ENCODE measurements at regions of chr16 and their contacts with region 1.

Region 1: DNA sequence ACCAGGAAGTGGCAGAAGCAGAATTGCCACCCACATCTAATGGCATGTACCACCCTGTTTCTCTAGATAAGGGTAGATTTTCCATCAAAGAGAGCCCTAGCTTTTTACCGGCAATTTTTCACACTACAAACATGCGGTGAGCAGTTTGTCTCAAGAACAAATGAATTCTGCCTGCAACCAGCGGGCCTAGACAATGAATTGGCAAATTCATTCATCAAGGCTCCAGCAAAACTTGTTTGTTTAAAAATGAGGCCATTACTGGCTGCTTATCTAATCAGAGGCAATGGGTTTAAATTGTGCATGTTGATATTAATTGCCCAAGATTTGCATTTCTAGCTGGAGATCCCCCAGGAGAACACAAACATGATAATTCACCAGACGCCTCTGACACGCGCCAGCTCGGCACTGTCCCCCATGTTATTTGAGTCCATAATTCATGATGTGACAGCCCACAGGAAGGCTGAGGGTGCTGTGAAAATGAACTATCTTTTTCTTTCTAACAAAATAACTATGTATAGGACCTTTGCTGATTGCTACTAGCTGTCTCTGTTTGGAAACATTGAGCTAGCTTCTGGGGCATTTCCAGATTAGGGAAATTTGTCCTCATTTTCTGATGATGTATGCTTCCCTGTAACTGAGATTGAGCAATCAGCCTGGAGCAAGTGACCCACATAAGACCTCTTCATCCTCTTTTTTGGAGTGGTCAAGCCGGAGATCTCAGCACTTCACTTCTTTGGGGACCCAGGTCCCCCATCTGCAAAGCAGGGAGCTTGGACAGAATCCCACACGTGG is 80.8 kb downstream of the CNGB1 start:
- DNase-seq: no peak
- H3K4me3 ChIP-seq: no peak overlapping the region
- H3K27ac ChIP-seq: no peak overlapping the region
- H3K4me1 ChIP-seq: peaks cover 0 to 5% (median under 1%) of the 10 kb centered on the region in 4 experiments; a peak in 2 of 7 replicates
- H3K27me3 ChIP-seq: peaks cover 0 to 2% (median 0%) of the 10 kb centered on the region in 4 experiments; a peak in 1 of 7 replicates
- CTCF ChIP-seq: no peak
- EP300 ChIP-seq: no peak
- POLR2A ChIP-seq: no peak
- RAD21 ChIP-seq: no peak

Region 2: GRCh38 chr16:57873218-57873617 is 16.9 kb before region 1 on chr16:
- CTCF ChIA-PET with region 1: interaction called, 10 read pairs
- POLR2A ChIA-PET with region 1: no interaction called
- DNase-seq: peak; percentile 50 to 64
- H3K4me3 ChIP-seq: peak overlapping the region in 3 of 4 experiments; percentile 18 to 39 (median 27); a peak in 4 of 8 replicates
- H3K27ac ChIP-seq: no peak overlapping the region
- H3K4me1 ChIP-seq: peaks cover 0 to 6% (median 3%) of the 10 kb centered on the region in 4 experiments; a peak in 3 of 7 replicates
- H3K27me3 ChIP-seq: no peaks in the 10 kb centered on the region
- CTCF ChIP-seq: no peak
- EP300 ChIP-seq: 0 out of 3 replicates have a peak, but pooled peaks of 1 of the 2 experiments have one; percentile 65
- POLR2A ChIP-seq: no peak
- RAD21 ChIP-seq: no peak

Region 3: DNA sequence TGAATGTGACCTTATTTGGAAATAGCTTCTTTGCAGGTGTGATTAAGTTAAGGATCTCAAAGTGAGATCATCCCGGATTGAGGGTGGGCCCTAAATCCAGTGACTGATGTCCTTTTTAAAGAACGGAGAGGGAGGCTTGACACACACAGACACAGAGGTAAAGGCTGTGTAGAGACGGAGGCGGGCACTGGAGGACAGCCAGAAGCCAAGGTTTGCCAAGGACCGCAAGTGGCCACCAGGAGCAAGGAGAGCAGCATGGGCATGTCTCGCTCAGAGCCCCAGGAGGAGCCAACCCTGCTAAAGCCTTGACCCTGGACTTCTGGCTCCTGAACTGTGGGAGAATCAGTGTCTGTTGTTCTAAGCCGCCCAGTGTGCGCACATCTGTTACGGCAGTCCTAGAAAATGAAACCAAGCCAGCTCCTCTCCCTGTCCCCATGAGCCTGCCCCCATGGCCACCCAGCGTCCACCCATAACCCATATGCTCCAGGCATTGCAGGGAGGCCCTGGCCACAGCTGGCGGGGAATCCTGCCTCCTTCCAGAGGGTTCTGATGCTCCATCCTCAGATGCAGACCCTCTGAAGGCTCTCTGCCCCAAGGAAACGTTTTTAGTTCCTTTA is 65.5 kb after region 1 on chr16:
- CTCF ChIA-PET with region 1: no interaction called
- POLR2A ChIA-PET with region 1: no interaction called
- DNase-seq: no peak
- H3K4me3 ChIP-seq: no peak overlapping the region
- H3K27ac ChIP-seq: no peak overlapping the region; the same call in 1 of the 2 replicates
- H3K4me1 ChIP-seq: peaks cover 0 to 10% (median 5%) of the 10 kb centered on the region in 4 experiments; a peak in 6 of 7 replicates
- H3K27me3 ChIP-seq: no peaks in the 10 kb centered on the region; a peak in 1 of 7 replicates
- CTCF ChIP-seq: peak in 2 of 3 experiments; percentile 5 to 12; a peak in 2 of 4 replicates
- EP300 ChIP-seq: no peak
- POLR2A ChIP-seq: no peak
- RAD21 ChIP-seq: no peak

Measured in H1 (cell line).